Aorta (tissue), 5 donors: ENCODE measurements at regions of chr12 and their contacts with region 1.

Region 1: DNA sequence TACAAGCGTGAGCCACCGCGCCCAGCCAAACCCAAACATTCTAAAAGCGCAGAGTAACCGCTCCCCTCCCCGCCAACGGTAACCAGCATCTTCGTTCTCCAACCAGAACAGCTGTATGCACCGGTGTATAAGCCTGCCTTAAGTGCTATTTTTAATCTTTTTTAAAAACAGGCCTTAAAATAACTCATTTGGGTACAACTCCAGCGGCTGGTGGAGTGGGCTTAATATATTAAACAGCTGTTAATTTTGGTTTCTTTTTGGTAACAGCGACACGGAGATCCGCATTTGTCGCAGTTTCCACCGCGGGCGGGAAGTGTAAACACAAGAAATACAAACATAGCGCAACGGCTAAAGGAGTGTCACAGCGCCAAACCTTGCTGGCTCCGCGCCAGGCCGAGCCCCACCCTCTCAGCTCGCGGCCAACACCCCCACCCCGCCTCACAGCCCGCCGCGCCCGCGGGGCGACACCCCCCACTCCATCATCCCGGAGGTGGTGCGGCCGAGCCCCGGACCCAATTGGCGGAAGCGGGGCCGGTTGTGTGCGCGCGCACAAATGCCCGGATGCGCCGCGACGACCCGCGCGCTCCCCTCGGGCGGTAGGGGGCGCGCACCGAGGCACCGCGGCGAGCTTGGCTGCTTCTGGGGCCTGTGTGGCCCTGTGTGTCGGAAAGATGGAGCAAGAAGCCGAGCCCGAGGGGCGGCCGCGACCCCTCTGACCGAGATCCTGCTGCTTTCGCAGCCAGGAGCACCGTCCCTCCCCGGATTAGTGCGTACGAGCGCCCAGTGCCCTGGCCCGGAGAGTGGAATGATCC is at the start of gene MDM2:
- DNase-seq: peak; percentile 95 to 98
- ATAC-seq: peak; percentile 98
- H3K4me3 ChIP-seq: peak within 1 kb of the TSS; percentile 91 to 92
- H3K27ac ChIP-seq: peak within 1 kb of the TSS; percentile 98 to 99
- H3K4me1 ChIP-seq: no peaks in the 10 kb centered on the region
- H3K27me3 ChIP-seq: no peaks in the 10 kb centered on the region
- total RNA-seq, gene MDM2: 100 to 121 TPM

Region 2: DNA sequence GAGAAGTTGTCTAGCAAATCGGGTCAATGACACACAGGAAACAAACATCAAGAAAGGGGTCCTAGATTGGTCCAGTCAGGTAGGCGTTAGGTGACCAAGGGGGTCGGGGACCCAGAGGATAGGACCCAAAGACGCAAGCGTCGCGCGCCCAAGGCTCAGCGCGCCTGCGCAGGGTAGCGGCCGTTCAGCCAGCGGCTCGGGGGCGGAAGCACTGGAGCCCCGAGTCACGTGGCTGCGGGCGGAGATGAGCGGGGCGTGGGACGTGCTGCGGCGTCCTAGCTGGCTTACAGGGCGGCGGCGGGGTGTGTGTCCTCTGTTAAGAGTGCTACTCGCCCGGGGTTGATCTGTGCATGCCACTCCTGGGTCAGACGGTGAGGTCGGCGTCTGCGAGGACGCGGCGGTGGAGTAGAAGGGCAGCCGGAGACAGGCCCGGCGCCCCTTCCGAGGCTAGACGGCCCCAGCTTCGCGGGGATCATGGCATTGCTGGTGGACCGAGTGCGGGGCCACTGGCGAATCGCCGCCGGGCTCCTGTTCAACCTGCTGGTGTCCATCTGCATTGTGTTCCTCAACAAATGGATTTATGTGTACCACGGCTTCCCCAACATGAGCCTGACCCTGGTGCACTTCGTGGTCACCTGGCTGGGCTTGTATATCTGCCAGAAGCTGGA is 61.7 kb before region 1 on chr12 and contains the start of gene SLC35E3:
- intact Hi-C with region 1: loop called in 1 of 2 experiments (anchors 2 kb)
- DNase-seq: peak; percentile 97
- ATAC-seq: peak; percentile 99
- H3K4me3 ChIP-seq: peak within 1 kb of the TSS; percentile 57 to 59
- H3K27ac ChIP-seq: peak within 1 kb of the TSS in 1 of 2 donors; percentile 11
- H3K4me1 ChIP-seq: no peaks in the 10 kb centered on the region
- H3K27me3 ChIP-seq: no peaks in the 10 kb centered on the region
- total RNA-seq, gene SLC35E3: 8.0 to 14.3 TPM

Region 3: DNA sequence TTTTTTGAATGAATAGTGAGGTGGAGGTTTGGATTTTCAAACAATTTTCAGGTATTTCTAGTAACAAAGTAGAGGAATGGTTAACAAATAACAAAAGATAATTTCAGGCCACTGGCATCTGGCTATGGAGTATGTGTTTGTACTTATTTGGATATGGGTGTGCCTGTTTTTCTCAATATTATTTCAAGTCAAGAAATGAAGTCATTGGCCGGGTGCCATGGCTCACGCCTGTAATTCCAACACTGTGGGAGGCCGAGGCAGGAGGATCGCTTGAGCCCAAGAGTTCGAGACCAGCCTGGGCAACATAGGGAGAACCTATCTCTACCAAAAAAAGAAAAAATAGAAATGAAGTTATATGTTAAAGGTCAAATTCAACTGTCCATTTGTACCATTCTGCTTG is 47.9 kb before region 1 on chr12:
- intact Hi-C with region 1: no loop called
- DNase-seq: no peak
- ATAC-seq: no peak
- H3K4me3 ChIP-seq: no peak overlapping the region
- H3K27ac ChIP-seq: no peak overlapping the region
- H3K4me1 ChIP-seq: no peaks in the 10 kb centered on the region
- H3K27me3 ChIP-seq: no peaks in the 10 kb centered on the region

Region 4: GRCh38 chr12:69097619-69098368 is 290.0 kb after region 1 on chr12:
- intact Hi-C with region 1: no loop called
- DNase-seq: no peak
- ATAC-seq: no peak
- H3K4me3 ChIP-seq: no peak overlapping the region
- H3K27ac ChIP-seq: no peak overlapping the region
- H3K4me1 ChIP-seq: no peaks in the 10 kb centered on the region
- H3K27me3 ChIP-seq: no peaks in the 10 kb centered on the region

Region 5: GRCh38 chr12:69204191-69204590 is 396.4 kb after region 1 on chr12:
- intact Hi-C with region 1: no loop called
- DNase-seq: no peak
- ATAC-seq: no peak
- H3K4me3 ChIP-seq: no peak overlapping the region
- H3K27ac ChIP-seq: no peak overlapping the region
- H3K4me1 ChIP-seq: no peaks in the 10 kb centered on the region
- H3K27me3 ChIP-seq: no peaks in the 10 kb centered on the region